ENCODE measurements at regions of chr15 and their contacts with region 1.

Region 1: DNA sequence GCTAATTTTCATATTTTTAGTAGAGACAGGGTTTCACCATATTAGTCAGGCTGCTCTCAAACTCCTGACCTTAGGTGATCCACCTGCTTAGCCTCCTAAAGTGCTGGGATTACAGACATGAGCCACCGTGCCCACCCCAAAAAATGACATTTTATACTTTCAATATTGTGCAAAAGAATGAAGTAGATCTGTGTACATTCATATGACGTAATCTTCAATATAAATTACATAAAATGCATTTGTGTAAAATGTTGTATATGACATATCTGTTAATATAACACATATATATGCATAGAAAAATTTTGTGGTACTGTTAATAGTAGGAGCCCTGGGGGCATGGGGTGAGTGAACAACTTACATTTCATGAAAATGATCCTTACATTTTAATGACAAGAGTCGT is 71.7 kb downstream of the RYR3 start:
- DNase-seq: no peak
- H3K4me3 ChIP-seq: no peak overlapping the region
- H3K27ac ChIP-seq: no peak overlapping the region
- H3K27me3 ChIP-seq: no peaks in the 10 kb centered on the region
- CTCF ChIP-seq: no peak

Region 2: DNA sequence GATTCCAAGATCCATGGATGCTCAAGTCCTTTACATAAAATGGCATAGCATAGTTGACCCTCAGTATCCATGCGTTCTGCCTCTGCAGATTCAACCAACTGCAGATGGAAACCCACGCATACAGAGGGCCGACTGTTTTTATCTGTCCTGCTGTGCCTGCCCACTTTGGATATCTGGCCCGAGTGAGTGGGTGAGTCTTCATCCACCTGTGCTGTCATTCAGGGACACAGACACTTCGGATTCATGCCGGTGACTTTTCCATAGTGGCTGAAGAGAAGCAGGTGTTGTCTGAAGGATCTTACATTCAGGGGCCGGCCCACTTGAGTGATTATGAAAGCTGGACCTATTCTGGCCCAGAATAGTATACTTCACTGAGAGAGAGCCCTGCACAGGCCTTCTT is 13.4 kb after region 1 on chr15:
- CTCF ChIA-PET with region 1: no interaction called
- POLR2A ChIA-PET with region 1: no interaction called
- DNase-seq: no peak
- H3K4me3 ChIP-seq: no peak overlapping the region
- H3K27ac ChIP-seq: no peak overlapping the region
- H3K27me3 ChIP-seq: no peaks in the 10 kb centered on the region
- CTCF ChIP-seq: no peak

Region 3: GRCh38 chr15:33533197-33533596 is 150.7 kb after region 1 on chr15:
- CTCF ChIA-PET with region 1: interaction called, 10 read pairs
- POLR2A ChIA-PET with region 1: no interaction called
- DNase-seq: no peak
- H3K4me3 ChIP-seq: no peak overlapping the region
- H3K27ac ChIP-seq: no peak overlapping the region
- H3K27me3 ChIP-seq: peaks cover 3% of the 10 kb centered on the region
- CTCF ChIP-seq: no peak

Measured in AG04450 (cell line).